Activated naive CD4-positive, alpha-beta T cell treated with anti-CD3 and anti-CD28 coated beads for 36 hours (primary cell): ENCODE measurements at regions of chr17 and their contacts with region 1.

Region 1: DNA sequence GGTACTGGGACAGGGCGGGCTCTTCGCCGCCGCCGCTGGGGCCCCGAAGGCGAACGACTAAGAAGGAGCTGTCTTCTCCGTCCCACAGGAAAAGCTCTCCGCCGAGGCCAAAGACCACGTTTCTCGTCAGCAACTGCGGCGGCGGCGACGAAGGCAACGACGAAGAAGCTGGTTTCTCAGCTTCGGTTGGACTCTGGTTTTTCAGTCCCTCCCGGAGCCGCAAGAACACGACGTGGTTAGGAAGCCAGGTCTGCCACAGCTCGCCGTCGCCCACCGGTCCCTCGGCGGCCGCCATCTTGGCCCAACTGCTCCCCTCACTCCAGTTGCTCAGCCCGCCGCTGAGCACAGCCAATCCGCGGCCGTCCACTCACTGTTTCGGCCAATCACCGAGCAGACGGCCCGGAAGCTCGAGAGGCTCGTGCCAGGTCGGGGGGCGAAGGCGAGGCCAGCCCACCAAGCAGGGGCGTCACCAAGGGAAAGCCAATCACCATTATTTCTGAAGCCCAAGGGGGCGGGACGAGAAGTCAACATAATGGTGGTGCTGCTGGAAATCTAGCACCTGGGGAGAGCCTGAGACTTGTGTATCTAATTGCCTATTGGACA is at the start of gene NUP88:
- DNase-seq: peak; percentile 97
- H3K4me3 Mint-ChIP-seq: peak within 1 kb of the TSS; percentile 100
- H3K27ac Mint-ChIP-seq: peak within 1 kb of the TSS; percentile 100
- H3K4me1 Mint-ChIP-seq: peaks cover 50% of the 10 kb centered on the region
- H3K27me3 Mint-ChIP-seq: no peaks in the 10 kb centered on the region
- total RNA-seq, gene NUP88: 115 to 131 TPM

Region 2: DNA sequence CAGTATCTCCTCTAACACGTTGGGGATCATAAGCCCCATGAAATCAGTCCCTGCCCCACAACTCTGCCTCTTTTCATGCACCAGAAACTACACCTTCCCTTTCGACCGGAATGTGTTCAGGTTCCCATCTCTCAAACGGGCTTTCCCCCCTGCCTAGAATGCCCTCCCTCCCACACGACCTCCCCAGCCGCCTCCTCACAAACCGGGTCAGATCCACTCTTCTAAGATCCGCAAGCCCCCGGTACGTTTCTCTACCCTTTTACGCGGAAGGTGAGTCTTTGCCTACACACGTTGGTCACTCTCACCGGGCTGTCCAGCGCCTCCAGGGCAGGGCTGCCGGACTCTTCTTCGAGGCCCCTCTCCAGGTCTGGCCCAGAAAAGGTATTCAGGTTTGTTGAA is 48.6 kb after region 1 on chr17:
- CTCF ChIA-PET with region 1: no interaction called
- intact Hi-C with region 1: loop called (anchors 1 kb)
- DNase-seq: peak; percentile 22
- H3K4me3 Mint-ChIP-seq: peak overlapping the region; percentile 80
- H3K27ac Mint-ChIP-seq: peak overlapping the region; percentile 0
- H3K4me1 Mint-ChIP-seq: peaks cover 37% of the 10 kb centered on the region
- H3K27me3 Mint-ChIP-seq: no peaks in the 10 kb centered on the region